ENCODE measurements at regions of chr6 and their contacts with region 1.

Region 1: DNA sequence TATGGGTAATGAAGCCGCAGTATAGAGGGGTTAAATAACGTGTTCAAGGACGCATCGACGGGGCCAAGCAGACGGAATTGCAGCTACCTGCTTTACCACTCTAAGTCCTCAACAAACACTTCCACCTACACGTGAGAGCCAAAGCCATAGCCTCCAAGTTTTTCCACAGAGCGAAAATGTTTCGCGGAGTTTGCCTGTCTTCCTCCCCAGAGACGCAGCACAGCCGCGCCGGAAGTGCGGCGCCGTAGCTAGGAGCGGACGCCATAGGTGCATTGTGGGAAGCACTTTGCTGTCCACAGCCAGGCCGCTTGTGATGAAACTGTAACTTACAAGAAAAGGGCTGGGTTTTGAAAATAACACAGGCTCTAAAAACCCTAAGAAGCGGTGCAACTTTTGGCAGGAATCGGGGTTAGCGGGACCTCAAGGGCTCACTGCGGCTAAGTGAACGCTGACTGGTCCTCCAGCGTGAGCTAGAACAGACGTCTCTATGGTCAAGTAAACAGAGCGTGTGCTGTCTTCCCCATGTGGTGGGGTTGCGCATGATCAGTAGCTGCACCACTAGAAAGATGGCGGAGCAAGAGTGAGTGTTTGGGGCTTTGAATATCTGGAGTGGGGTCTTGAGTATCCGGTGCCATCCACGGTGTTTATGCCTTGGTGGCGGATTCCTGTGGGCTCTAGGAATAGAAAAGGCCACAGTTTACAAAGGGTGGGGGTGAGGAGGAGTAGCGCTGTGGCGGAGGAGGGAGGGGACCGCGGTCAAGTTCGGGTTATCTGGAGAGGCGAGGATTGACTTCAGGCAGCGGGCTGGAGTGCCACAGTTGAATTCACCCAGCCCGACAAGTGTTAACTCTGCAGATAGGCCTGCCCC is at the start of gene RPL7L1:
- DNase-seq: peak; percentile 77 to 85 (median 81)
- H3K4me3 ChIP-seq: peak within 1 kb of the TSS; percentile 72
- H3K27ac ChIP-seq: peak within 1 kb of the TSS; percentile 81 to 91
- H3K4me1 ChIP-seq: peaks cover 3% of the 10 kb centered on the region
- H3K27me3 ChIP-seq: no peaks in the 10 kb centered on the region
- CTCF ChIP-seq: peak in 1 of 3 donors; percentile 47
- EP300 ChIP-seq: no peak
- POLR2A ChIP-seq: peak; percentile 60
- total RNA-seq, gene RPL7L1: 60.1 to 77.9 (median 68.1) TPM

Region 2: DNA sequence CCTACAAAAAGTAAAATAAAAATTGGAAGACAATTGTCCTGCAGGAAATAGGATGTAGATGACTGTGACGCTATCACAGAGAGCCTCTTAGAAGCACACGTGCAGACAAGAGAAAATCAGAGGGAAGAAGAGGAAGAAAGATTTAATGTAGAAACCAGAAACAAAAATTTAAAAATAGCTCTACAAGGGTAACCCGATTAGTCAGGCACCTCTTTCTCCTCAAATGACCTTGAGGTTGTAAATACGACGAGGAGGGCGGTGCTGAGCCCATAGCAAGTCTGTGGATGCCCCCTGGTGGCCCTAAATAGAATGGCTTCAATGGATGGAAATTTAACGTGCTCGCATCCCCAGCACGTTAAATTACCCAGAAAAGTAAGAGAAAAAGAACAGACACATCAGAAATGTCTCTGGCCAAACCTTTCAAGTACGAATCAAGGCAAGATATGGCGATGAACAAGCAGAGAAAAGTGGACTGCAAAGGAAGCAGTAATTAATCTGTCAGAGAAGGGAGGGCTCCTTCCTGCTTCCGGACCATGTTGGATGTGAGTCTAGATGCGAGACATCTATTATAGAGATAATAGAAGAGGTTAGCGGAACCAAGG is 153.0 kb before region 1 on chr6:
- intact Hi-C with region 1: loop called in 2 of 4 experiments (anchors 5 to 10 kb)
- DNase-seq: peak; percentile 65 to 87 (median 81)
- H3K4me3 ChIP-seq: peak overlapping the region; percentile 43
- H3K27ac ChIP-seq: peak overlapping the region; percentile 26 to 85
- H3K4me1 ChIP-seq: peaks cover 5% of the 10 kb centered on the region
- H3K27me3 ChIP-seq: no peaks in the 10 kb centered on the region
- CTCF ChIP-seq: peak; percentile 90 to 94 (median 93)
- EP300 ChIP-seq: no peak
- POLR2A ChIP-seq: no peak

Region 3: GRCh38 chr6:42782622-42783176 is 96.9 kb before region 1 on chr6:
- intact Hi-C with region 1: loop called in 1 of 4 experiments (anchors 10 kb)
- DNase-seq: peak; percentile 73 to 87 (median 81)
- H3K4me3 ChIP-seq: peak overlapping the region; percentile 67
- H3K27ac ChIP-seq: peak overlapping the region; percentile 99 to 100
- H3K4me1 ChIP-seq: peaks cover 10% of the 10 kb centered on the region
- H3K27me3 ChIP-seq: no peaks in the 10 kb centered on the region
- CTCF ChIP-seq: no peak
- EP300 ChIP-seq: no peak
- POLR2A ChIP-seq: peak; percentile 66

Region 4: GRCh38 chr6:42845327-42845694 is 34.3 kb before region 1 on chr6:
- intact Hi-C with region 1: no loop called
- DNase-seq: no peak
- H3K4me3 ChIP-seq: no peak overlapping the region
- H3K27ac ChIP-seq: no peak overlapping the region
- H3K4me1 ChIP-seq: no peaks in the 10 kb centered on the region
- H3K27me3 ChIP-seq: no peaks in the 10 kb centered on the region
- CTCF ChIP-seq: no peak
- EP300 ChIP-seq: no peak
- POLR2A ChIP-seq: no peak

Region 5: GRCh38 chr6:42911171-42912021 is 31.8 kb after region 1 on chr6:
- intact Hi-C with region 1: no loop called
- DNase-seq: no peak
- H3K4me3 ChIP-seq: peak overlapping the region; percentile 19
- H3K27ac ChIP-seq: no peak overlapping the region
- H3K4me1 ChIP-seq: peaks cover 11% of the 10 kb centered on the region
- H3K27me3 ChIP-seq: no peaks in the 10 kb centered on the region
- CTCF ChIP-seq: no peak
- EP300 ChIP-seq: no peak
- POLR2A ChIP-seq: no peak

Measured in ovary (tissue), 10 donors.